ENCODE measurements at regions of chr3 and their contacts with region 1.

Region 1: GRCh38 chr3:101849721-101850245 is 469 bp downstream of the NFKBIZ start:
- DNase-seq: peak; percentile 88
- H3K4me3 Mint-ChIP-seq: peak overlapping the region; percentile 97
- H3K27ac Mint-ChIP-seq: peak overlapping the region; percentile 100
- H3K4me1 Mint-ChIP-seq: peaks cover 53% of the 10 kb centered on the region
- H3K27me3 Mint-ChIP-seq: no peaks in the 10 kb centered on the region

Region 2: DNA sequence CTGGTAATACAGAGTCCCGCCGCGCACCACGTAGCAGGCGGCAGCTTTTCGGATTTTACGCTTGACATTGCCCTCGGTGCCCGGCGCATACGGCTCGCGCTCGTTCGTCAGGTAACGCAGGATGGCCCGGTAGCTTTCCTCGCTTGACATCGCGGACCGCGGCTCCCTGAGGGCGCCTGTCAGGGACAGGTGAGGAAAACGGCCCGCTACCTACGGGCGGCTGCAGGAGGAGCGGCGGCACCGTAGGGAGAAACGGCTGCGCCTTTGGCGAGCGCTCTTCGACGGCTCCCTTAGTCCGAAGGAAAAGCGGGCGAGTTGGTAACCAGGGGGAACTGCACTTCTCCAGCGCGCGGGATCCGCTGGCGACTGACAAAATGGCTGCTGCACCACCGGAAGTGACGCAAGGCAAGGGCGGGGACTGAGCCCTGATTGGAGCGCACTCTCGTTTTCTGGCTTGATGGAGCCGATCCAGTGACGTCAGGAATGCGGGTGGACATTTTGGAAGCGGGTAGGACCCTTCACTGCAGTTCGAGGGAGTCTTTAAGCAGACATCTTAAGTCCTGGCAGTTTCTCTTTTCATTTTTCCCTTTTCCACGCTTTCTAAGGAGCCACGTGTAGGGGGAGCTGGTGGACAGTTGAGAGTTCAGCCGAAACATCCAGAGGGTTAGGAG is 172.9 kb before region 1 on chr3 and contains the start of gene ZBTB11:
- intact Hi-C with region 1: loop called (anchors 2 kb)
- DNase-seq: peak; percentile 100
- H3K4me3 Mint-ChIP-seq: peak within 1 kb of the TSS; percentile 89
- H3K27ac Mint-ChIP-seq: peak within 1 kb of the TSS; percentile 97
- H3K4me1 Mint-ChIP-seq: peaks cover 36% of the 10 kb centered on the region
- H3K27me3 Mint-ChIP-seq: no peaks in the 10 kb centered on the region
- total RNA-seq, gene ZBTB11: 29.0 and 30.2 TPM in 2 replicates

Region 3: DNA sequence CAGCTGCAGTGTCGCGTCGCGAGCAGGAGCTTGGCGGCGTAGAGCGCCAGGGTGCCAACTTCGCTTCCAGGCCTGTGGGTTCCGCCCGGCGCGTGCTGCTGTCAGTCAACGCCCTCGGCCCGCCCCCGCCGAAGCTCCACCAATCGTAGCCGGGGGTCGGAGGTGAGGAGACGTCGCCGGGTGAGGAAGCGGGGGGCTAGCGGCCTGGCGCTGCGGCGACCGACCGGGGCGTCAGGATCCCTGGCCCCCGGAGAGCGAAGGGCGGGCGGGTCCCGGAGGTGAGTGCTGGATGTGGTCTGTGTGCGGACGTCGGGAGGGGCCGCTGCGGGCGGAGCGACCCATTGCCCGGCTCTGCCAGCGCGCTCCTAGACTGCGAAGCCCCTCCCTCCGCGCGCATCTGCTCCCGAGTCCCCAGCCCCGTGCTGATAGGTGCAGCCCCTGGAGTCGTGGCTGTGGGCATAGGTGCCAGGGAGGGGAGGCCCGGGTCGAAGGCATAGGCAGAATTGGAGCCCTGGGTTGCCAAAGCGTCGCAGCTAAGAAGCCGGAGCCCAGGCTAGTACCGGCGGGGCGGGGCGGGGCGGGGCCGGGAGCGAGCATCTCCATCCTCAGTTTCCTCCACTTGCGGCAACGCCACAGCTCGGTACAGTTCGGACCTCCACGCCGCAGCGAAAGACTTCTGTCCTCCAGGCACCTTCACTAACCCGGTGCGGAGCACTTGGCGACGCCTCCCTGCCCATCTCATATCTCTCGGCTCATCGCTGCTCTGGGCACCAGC is 70.5 kb before region 1 on chr3 and contains the start of gene NXPE3:
- intact Hi-C with region 1: loop called (anchors 2 kb)
- DNase-seq: peak; percentile 98
- H3K4me3 Mint-ChIP-seq: peak within 1 kb of the TSS; percentile 97
- H3K27ac Mint-ChIP-seq: peak within 1 kb of the TSS; percentile 94
- H3K4me1 Mint-ChIP-seq: peaks cover 31% of the 10 kb centered on the region
- H3K27me3 Mint-ChIP-seq: no peaks in the 10 kb centered on the region
- total RNA-seq, gene NXPE3: 17.2 and 18.2 TPM in 2 replicates

Region 4: GRCh38 chr3:101827211-101828174 is 22.3 kb before region 1 on chr3:
- intact Hi-C with region 1: loop called (anchors 1 kb)
- DNase-seq: peak; percentile 94
- H3K4me3 Mint-ChIP-seq: peak overlapping the region; percentile 86
- H3K27ac Mint-ChIP-seq: peak overlapping the region; percentile 97
- H3K4me1 Mint-ChIP-seq: peaks cover 52% of the 10 kb centered on the region
- H3K27me3 Mint-ChIP-seq: no peaks in the 10 kb centered on the region

Region 5: DNA sequence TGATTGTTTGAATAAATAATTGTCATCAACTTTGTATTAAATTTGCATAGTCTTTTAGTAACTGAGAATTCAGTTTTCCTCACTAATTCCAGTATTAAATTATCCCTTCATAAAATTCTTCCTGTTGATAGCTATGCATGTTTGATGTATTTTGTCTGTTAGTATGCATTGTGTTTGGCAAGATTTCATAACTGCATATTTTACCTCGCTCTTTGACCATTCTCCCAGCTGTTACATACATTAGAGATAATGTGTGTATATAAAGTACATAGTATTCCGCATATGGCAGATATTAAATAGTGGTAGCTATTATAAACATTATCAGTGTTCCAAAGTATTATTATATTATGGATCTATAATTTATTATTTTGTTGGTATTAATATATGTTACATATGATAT is 11.1 kb before region 1 on chr3:
- intact Hi-C with region 1: no loop called
- DNase-seq: no peak
- H3K4me3 Mint-ChIP-seq: no peak overlapping the region
- H3K27ac Mint-ChIP-seq: no peak overlapping the region
- H3K4me1 Mint-ChIP-seq: peaks cover 39% of the 10 kb centered on the region
- H3K27me3 Mint-ChIP-seq: no peaks in the 10 kb centered on the region

Region 6: DNA sequence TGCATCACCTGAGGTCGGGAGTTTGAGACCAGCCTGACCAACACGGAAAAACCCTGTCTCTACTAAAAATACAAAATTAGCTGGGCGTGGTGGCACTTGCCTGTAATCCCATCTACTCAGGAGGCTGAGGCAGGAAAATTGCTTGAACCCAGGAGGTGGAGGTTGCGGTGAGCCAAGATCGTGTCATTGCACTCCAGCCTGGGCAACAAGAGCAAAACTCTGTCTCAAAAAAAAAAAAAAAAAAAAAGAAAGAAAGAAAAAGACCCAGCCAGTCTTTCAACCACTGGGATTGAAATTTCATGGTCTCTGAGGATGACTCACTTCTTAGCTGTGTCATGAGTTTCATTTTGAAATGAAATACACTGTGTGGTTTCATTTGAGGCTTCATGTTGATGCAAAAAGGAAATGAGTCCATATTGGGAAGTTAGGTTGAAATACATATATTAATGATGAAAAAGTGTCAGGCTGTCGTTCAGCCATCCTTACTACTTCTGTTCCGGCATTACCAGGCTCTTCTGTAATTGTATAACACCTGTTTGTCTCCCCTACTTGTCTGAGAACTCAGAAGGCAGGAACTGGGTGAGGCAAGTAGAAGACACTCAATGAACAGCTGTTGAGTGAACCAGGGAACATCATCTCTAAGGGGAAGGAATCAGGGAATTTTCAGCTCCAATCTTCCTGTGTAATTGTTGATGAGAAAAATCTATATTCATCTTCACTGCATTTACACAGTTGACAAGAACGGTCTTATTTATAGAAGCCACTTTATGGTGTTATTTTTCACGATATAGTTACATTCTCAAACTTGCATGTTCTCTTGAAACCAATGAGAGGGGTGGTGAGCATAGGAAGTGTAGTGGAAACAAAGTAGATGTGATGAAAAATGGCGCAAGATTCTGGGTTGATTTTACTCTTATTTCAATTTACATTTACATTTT is 86.9 kb after region 1 on chr3:
- intact Hi-C with region 1: loop called (anchors 1 kb)
- DNase-seq: peak; percentile 79
- H3K4me3 Mint-ChIP-seq: peak overlapping the region; percentile 55
- H3K27ac Mint-ChIP-seq: peak overlapping the region; percentile 73
- H3K4me1 Mint-ChIP-seq: peaks cover 27% of the 10 kb centered on the region
- H3K27me3 Mint-ChIP-seq: peaks cover 15% of the 10 kb centered on the region

Region 7: GRCh38 chr3:102092617-102093466 is 243.1 kb after region 1 on chr3:
- intact Hi-C with region 1: loop called (anchors 1 kb)
- DNase-seq: peak; percentile 71
- H3K4me3 Mint-ChIP-seq: peak overlapping the region; percentile 44
- H3K27ac Mint-ChIP-seq: peak overlapping the region; percentile 92
- H3K4me1 Mint-ChIP-seq: peaks cover 43% of the 10 kb centered on the region
- H3K27me3 Mint-ChIP-seq: peaks cover 4% of the 10 kb centered on the region